ENCODE measurements at regions of chr2 and their contacts with region 1.

Region 1: DNA sequence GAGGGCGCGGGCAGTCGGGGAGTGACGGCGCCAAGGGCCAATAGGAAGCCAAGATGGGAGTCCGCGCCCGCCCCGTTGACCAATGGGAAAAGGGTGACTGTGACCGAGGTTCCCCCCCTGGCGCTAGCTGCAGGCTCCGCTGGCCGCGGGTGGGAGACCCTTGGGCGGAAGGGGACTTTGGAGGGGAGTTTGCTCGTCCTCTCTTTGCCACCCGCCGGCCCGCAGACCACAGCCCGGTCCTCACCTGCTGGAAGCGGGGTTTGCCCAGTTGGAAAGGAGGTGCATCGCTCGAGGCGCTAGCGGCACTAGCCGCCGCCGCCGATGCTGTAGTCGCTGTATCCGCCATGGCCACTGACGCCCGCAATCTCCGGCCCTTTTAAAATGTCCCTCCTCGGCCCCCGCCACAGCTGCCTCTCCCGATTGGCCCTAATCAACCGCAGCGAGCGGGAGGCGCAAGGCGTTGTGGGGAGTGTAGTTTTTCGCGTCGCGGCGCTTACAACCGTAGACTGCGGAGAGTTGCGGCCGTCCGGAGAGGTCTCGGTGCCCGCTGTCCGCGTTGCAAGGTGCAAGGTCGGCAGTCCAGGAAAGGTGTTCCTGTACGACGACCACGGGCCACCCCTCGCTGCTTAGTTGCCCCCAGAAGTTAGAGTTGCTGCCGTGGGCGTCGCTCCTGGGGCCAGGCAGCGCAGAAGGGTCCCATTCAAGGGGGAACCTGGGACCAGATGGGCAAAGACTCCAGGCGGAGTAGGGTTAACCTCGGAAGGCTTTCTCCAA is at the start of gene SFXN5:
- DNase-seq: peak; percentile 96
- H3K4me3 Mint-ChIP-seq: peak within 1 kb of the TSS; percentile 88
- H3K27ac Mint-ChIP-seq: peak within 1 kb of the TSS; percentile 87
- H3K4me1 Mint-ChIP-seq: peaks cover 20% of the 10 kb centered on the region
- H3K27me3 Mint-ChIP-seq: no peaks in the 10 kb centered on the region
- total RNA-seq, gene SFXN5: 5.3 to 6.8 TPM

Region 2: GRCh38 chr2:72793798-72794440 is 277.6 kb before region 1 on chr2:
- CTCF ChIA-PET with region 1: no interaction called
- intact Hi-C with region 1: no loop called
- DNase-seq: no peak
- H3K4me3 Mint-ChIP-seq: no peak overlapping the region
- H3K27ac Mint-ChIP-seq: no peak overlapping the region
- H3K4me1 Mint-ChIP-seq: peaks cover 10% of the 10 kb centered on the region
- H3K27me3 Mint-ChIP-seq: no peaks in the 10 kb centered on the region

Region 3: DNA sequence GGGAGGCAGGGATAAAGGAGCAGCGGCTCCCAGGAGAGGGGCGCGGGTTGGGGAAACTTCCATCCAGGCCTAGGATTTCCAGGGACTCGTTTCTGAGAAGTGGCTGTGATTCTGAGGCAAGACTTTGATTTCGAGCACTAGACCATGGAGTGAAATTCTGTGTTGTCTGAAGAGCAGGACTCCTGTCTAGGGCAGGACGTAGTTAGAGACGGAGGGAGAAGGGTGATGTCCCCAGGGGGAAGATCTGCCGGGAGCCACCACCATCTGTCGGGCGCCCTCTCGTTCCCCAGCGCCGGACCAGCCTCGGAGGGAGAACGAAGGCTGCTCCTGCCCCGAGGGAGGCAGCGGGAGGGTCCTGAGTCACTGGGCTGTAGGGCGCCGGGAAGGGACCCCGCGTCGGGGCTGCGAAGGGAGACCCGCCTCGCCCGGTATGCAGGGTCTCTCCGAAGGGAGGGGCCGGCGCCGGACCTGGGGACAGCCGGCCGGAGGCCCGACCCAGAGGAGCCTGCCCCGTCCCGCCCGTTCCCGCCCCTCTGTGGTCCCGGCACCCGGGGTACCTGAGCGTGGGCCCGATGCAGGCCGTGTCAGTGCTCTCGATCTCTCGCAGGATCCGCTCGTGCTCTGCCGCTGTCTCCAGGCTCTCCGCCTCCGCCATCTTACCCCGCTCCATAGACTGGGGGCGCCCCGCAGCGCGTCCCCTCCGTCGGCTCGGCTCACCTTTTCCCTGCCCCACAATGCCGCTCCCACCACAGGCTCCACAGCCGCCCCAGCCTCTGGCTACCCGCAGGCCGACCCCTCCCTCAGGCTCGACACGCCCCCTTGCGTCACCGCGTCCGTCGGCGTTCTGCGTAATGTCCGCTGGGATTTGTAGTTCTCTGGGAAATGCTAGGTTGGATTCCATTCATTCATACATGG is 246.0 kb before region 1 on chr2 and contains the start of gene EXOC6B:
- CTCF ChIA-PET with region 1: no interaction called
- intact Hi-C with region 1: loop called (anchors 1 kb)
- DNase-seq: peak; percentile 88
- H3K4me3 Mint-ChIP-seq: peak within 1 kb of the TSS; percentile 94
- H3K27ac Mint-ChIP-seq: no peak within 1 kb of the TSS
- H3K4me1 Mint-ChIP-seq: peaks cover 39% of the 10 kb centered on the region
- H3K27me3 Mint-ChIP-seq: peaks cover 2% of the 10 kb centered on the region
- total RNA-seq, gene EXOC6B: 6.1 to 7.5 TPM

Region 4: GRCh38 chr2:72915907-72916742 is 155.4 kb before region 1 on chr2:
- CTCF ChIA-PET with region 1: no interaction called
- intact Hi-C with region 1: loop called (anchors 1 kb)
- DNase-seq: peak; percentile 53
- H3K4me3 Mint-ChIP-seq: peak overlapping the region; percentile 71
- H3K27ac Mint-ChIP-seq: no peak overlapping the region
- H3K4me1 Mint-ChIP-seq: peaks cover 30% of the 10 kb centered on the region
- H3K27me3 Mint-ChIP-seq: peaks cover 70% of the 10 kb centered on the region

Region 5: GRCh38 chr2:72973566-72974435 is 97.7 kb before region 1 on chr2:
- CTCF ChIA-PET with region 1: no interaction called
- intact Hi-C with region 1: no loop called
- DNase-seq: peak; percentile 53
- H3K4me3 Mint-ChIP-seq: no peak overlapping the region
- H3K27ac Mint-ChIP-seq: no peak overlapping the region
- H3K4me1 Mint-ChIP-seq: no peaks in the 10 kb centered on the region
- H3K27me3 Mint-ChIP-seq: no peaks in the 10 kb centered on the region

Region 6: DNA sequence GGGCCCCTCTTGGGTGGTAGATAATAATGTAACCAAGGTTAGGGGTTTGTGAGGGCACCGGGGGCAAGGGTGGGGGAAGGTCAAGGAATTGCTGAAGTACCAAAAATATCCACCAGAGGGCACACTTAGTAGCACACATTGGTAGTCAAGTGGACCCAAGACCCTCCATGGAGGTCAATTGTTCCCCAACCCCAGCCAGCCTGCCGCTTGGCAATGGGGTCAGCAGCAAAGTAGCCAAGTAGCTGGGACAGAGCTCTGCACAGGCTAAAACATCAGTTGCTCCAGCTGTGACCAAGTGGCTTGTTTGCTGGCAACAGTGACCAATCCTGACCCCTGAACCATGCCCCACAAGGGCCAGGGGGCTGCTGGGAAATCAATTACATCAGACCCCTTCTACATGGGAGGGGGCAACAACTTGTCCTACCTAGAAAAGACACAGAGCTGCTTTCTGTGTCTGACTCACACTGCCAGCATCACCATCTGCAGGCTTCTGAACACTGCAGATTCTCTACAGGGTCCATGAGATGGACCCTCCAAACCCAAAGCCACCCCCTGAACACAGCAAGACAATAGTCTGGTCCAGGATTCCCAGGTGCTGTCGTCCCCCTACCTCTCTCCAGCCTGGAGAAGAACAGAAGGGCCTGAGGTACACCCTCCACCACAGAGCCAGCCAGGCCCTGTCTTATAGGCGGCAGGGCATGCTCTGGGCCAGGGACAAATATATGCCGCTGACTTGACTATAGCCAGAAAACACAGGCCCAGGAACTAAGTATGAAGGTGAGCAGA is 78.2 kb before region 1 on chr2:
- CTCF ChIA-PET with region 1: interaction called, 3 read pairs
- intact Hi-C with region 1: loop called (anchors 2 kb)
- DNase-seq: peak; percentile 42
- H3K4me3 Mint-ChIP-seq: no peak overlapping the region
- H3K27ac Mint-ChIP-seq: no peak overlapping the region
- H3K4me1 Mint-ChIP-seq: no peaks in the 10 kb centered on the region
- H3K27me3 Mint-ChIP-seq: no peaks in the 10 kb centered on the region

Region 7: DNA sequence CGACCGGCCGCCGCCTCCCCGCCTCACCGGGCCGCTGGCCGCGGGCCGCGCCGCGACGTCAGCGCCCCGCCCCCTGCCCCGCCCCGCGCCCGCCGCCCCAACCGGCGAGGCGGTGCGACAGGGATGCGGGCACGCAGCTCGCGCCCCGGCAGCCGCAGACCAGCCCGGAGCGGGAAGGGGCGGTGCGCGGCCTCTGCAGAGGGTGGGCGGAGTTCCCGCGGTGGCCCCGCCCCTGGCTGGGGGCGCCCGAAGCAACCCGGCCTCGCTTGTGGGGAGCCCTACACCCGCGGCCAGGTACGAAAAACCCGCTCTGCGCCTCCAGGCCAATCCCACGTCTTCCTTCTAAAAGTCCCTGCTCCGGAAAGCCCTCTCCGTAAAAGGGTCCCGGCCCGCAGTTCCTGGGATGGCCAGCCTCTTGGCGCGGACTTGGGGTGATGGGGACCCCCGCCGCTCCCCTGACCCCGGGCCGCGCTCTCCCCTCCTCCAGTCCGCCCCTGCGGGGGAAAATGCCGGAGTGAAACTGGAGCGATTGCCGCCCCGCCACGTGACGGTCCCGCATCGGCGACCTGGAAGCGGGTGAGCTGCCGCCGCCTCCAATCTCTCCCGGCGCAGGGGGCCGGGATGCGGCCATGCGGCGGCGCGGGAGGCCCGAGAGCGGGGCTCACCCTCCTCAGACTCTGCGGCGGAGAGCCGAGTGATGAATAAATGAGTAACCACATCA is 41.5 kb after region 1 on chr2 and contains the start of gene RAB11FIP5:
- CTCF ChIA-PET with region 1: interaction called, 3 read pairs
- intact Hi-C with region 1: loop called (anchors 1 kb)
- DNase-seq: peak; percentile 78
- H3K4me3 Mint-ChIP-seq: peak within 1 kb of the TSS; percentile 81
- H3K27ac Mint-ChIP-seq: no peak within 1 kb of the TSS
- H3K4me1 Mint-ChIP-seq: peaks cover 21% of the 10 kb centered on the region
- H3K27me3 Mint-ChIP-seq: no peaks in the 10 kb centered on the region
- total RNA-seq, gene RAB11FIP5: 7.3 to 7.4 TPM

Region 8: GRCh38 chr2:73163483-73164367 is 92.2 kb after region 1 on chr2:
- CTCF ChIA-PET with region 1: no interaction called
- intact Hi-C with region 1: loop called (anchors 5 kb)
- DNase-seq: peak; percentile 82
- H3K4me3 Mint-ChIP-seq: no peak overlapping the region
- H3K27ac Mint-ChIP-seq: no peak overlapping the region
- H3K4me1 Mint-ChIP-seq: no peaks in the 10 kb centered on the region
- H3K27me3 Mint-ChIP-seq: peaks cover 2% of the 10 kb centered on the region

Region 9: DNA sequence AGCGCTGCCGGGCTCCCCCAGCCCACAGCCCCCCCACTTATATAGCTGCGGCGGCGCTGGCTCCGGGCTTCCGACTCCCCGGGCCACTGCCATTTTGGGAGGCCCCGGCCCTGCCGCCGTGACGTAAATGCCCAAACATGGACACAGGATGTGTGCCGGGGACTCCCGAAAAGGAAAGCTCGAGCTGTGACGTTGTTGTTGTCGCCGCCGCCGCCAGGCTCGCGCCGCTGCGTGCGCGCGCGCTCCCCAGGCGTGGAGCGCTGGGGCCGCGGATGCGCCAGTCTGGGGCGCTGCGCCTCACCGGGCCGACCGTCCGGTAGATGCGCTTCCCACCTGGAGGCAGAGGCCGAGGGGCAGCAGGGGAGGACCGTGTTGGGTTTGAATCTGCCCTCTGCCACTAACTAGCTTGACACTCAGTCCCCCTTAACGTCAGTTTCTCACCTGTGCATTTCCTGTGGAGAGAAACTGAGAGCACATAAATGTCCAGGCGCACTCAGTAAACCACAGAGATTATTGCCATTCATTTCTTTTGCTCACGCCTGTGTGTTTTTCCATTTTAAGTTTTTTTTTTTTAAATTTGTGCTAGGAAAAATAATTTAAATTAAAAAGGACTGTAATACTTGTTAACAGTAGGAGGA is 222.1 kb after region 1 on chr2 and contains the start of gene EGR4:
- CTCF ChIA-PET with region 1: no interaction called
- intact Hi-C with region 1: loop called (anchors 2 kb)
- DNase-seq: peak; percentile 94
- H3K4me3 Mint-ChIP-seq: peak within 1 kb of the TSS; percentile 73
- H3K27ac Mint-ChIP-seq: no peak within 1 kb of the TSS
- H3K4me1 Mint-ChIP-seq: peaks cover 14% of the 10 kb centered on the region
- H3K27me3 Mint-ChIP-seq: peaks cover 65% of the 10 kb centered on the region
- total RNA-seq, gene EGR4: 0.07 to 0.12 TPM

Region 10: DNA sequence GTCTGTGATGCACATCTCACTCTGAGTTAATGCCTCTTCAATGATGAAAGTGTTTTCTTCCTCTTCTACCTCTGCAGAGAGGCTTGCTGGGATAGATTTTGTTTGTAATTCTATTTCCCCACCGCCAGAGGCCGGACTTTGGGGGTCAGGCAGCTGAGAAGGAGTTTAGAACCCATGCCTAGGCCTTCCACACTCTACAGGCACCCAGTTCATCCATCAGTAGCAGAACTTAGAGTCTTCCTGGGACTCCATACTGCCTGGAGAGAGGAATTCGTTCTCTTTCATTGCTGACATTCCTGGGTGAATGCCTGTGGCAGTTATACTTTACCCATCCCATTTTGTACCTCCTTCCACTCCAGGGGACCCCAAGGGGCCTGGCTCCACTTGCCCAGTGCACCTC is 656.5 kb after region 1 on chr2:
- CTCF ChIA-PET with region 1: no interaction called
- intact Hi-C with region 1: no loop called
- DNase-seq: no peak
- H3K4me3 Mint-ChIP-seq: no peak overlapping the region
- H3K27ac Mint-ChIP-seq: no peak overlapping the region
- H3K4me1 Mint-ChIP-seq: no peaks in the 10 kb centered on the region
- H3K27me3 Mint-ChIP-seq: no peaks in the 10 kb centered on the region